ENCODE measurements at regions of chr6 and their contacts with region 1.

Region 1: GRCh38 chr6:62338477-62338876 is 52.5 kb upstream of the KHDRBS2 start:
- DNase-seq: no peak
- H3K4me3 ChIP-seq: no peak overlapping the region
- H3K27ac ChIP-seq: no peak overlapping the region
- H3K4me1 ChIP-seq: no peaks in the 10 kb centered on the region
- CTCF ChIP-seq: no peak

Region 2: GRCh38 chr6:62298745-62299392 is 39.6 kb before region 1 on chr6:
- CTCF ChIA-PET with region 1: no interaction called
- POLR2A ChIA-PET with region 1: no interaction called
- intact Hi-C with region 1: no loop called
- DNase-seq: peak; percentile 74
- H3K4me3 ChIP-seq: peak overlapping the region; percentile 36
- H3K27ac ChIP-seq: peak overlapping the region; percentile 70
- H3K4me1 ChIP-seq: peaks cover 34% of the 10 kb centered on the region
- CTCF ChIP-seq: no peak

Region 3: GRCh38 chr6:62324834-62325233 is 13.6 kb before region 1 on chr6:
- CTCF ChIA-PET with region 1: no interaction called
- POLR2A ChIA-PET with region 1: interaction called, 4 read pairs
- intact Hi-C with region 1: loop called (anchors 1 kb)
- DNase-seq: no peak
- H3K4me3 ChIP-seq: no peak overlapping the region
- H3K27ac ChIP-seq: no peak overlapping the region
- H3K4me1 ChIP-seq: no peaks in the 10 kb centered on the region
- CTCF ChIP-seq: no peak

Region 4: GRCh38 chr6:62400521-62401259 is 62.2 kb after region 1 on chr6:
- CTCF ChIA-PET with region 1: no interaction called
- POLR2A ChIA-PET with region 1: no interaction called
- intact Hi-C with region 1: no loop called
- DNase-seq: no peak
- H3K4me3 ChIP-seq: no peak overlapping the region
- H3K27ac ChIP-seq: no peak overlapping the region
- H3K4me1 ChIP-seq: no peaks in the 10 kb centered on the region
- CTCF ChIP-seq: no peak